ENCODE measurements at regions of chr4 and their contacts with region 1.

Region 1: DNA sequence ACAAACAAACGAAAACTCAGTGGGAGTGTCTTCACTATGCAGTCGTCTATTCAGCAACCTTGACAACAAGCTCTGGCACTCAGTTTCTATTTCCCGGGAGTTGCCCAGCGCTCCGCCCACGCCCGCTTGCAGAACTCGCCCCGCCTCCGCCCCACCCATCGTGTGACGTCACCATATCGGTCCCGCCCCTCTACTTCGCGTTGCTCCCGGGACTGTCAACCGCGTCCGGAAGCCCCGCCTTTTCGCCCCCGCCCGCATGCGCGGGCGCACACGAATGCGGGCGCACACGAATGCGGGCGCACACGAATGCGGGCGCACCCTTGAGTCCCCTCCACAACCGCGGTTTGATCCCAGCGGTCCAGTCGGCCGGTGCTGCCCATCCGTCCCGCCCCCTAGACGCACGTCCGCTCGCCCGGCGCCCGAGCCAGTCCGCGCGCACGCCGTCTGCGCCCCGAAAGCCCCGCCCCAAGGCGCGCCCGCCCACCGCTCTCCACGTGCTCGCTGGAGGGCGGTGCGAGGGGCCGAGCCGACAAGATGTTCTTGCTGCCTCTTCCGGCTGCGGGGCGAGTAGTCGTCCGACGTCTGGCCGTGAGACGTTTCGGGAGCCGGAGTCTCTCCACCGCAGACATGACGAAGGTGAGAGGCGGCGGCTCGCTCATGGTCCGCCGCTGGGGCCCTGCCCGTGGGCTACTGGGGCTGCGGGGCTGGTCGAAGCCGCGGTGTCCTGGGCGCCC is at the start of gene LAP3:
- DNase-seq: peak; percentile 100
- H3K4me3 Mint-ChIP-seq: peak within 1 kb of the TSS; percentile 97
- H3K27ac Mint-ChIP-seq: peak within 1 kb of the TSS; percentile 96
- H3K4me1 Mint-ChIP-seq: peaks cover 37% of the 10 kb centered on the region
- H3K27me3 Mint-ChIP-seq: no peaks in the 10 kb centered on the region
- total RNA-seq, gene LAP3: 114 and 126 TPM in 2 replicates

Region 2: GRCh38 chr4:15756361-15756861 is 1820.7 kb before region 1 on chr4:
- intact Hi-C with region 1: loop called (anchors 5 kb)
- DNase-seq: peak; percentile 92
- H3K4me3 Mint-ChIP-seq: peak overlapping the region; percentile 77
- H3K27ac Mint-ChIP-seq: peak overlapping the region; percentile 94
- H3K4me1 Mint-ChIP-seq: peaks cover 51% of the 10 kb centered on the region
- H3K27me3 Mint-ChIP-seq: no peaks in the 10 kb centered on the region

Region 3: DNA sequence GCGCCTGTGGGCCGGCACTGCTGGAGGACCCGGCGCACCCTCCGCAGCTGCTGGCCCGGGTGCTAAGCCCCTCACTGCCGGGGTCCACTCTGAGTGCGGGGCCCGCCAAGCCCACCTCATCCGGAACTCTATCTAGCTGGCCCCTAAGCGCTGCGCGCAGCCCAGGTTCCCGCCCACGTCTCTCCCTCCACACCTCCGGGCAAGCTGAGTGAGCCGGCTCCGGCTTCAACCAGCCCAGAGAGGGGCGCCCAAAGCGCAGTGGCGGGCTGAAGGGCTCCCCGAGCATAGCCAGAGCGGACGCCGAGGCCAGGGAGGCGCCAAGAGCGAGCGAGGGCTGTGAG is 140.4 kb before region 1 on chr4:
- intact Hi-C with region 1: no loop called
- DNase-seq: peak; percentile 52
- H3K4me3 Mint-ChIP-seq: no peak overlapping the region
- H3K27ac Mint-ChIP-seq: no peak overlapping the region
- H3K4me1 Mint-ChIP-seq: no peaks in the 10 kb centered on the region
- H3K27me3 Mint-ChIP-seq: peaks cover 2% of the 10 kb centered on the region

Region 4: DNA sequence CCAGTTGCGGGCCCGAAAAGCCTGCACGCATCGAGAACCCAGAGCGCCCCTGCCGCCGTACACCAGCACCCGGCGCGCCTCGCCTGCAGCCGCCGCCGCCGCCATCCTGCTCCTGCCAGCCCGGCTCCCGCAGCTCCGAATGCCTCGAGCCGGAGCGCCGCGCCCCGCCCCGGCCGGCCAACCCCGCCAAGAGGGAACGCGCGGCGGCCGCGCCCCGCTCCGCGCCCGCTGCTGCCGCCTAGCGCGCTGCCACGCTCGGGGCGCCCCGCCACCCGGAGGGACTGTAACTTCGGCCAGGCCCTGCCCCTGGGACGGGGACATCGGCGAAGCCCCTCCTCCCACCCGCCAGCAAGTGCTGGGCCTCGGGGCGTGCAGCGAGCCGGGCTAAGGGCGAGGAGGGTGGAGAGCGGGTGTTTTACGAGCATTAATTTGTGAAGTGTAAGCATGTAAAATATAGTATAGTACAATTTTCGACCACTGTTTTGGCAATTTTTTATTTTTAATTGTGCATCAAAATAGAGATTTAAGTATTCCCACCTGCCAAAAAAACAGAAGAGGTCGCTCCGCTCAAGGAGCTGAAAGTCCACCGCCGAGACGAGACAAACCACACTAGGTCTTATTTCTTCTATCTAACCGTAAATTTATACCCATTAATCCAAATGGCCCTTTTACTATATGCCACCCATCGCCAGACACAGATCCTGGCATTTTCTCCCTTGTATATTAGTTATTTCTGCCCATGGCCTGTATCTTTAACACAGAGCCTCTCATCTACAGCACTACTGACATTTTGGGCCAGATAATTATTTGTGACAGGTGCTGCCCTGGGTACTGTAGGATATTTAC is 64.9 kb before region 1 on chr4 and contains the start of gene QDPR:
- intact Hi-C with region 1: loop called (anchors 1 kb)
- DNase-seq: peak; percentile 92
- H3K4me3 Mint-ChIP-seq: peak within 1 kb of the TSS; percentile 96
- H3K27ac Mint-ChIP-seq: peak within 1 kb of the TSS; percentile 91
- H3K4me1 Mint-ChIP-seq: peaks cover 18% of the 10 kb centered on the region
- H3K27me3 Mint-ChIP-seq: peaks cover 11% of the 10 kb centered on the region
- total RNA-seq, gene QDPR: 31.8 and 34.4 TPM in 2 replicates

Region 5: GRCh38 chr4:17614416-17615299 is 37.6 kb after region 1 on chr4 and contains the start of gene MED28:
- intact Hi-C with region 1: loop called (anchors 1 kb)
- DNase-seq: peak; percentile 98
- H3K4me3 Mint-ChIP-seq: peak within 1 kb of the TSS; percentile 88
- H3K27ac Mint-ChIP-seq: peak within 1 kb of the TSS; percentile 92
- H3K4me1 Mint-ChIP-seq: peaks cover 30% of the 10 kb centered on the region
- H3K27me3 Mint-ChIP-seq: peaks cover 2% of the 10 kb centered on the region
- total RNA-seq, gene MED28: 54.5 and 55.5 TPM in 2 replicates

Region 6: GRCh38 chr4:17810260-17811077 is 233.4 kb after region 1 on chr4 and contains the starts of genes DCAF16 and NCAPG:
- intact Hi-C with region 1: loop called (anchors 1 kb)
- DNase-seq: peak; percentile 100
- H3K4me3 Mint-ChIP-seq: peak within 1 kb of the TSS; percentile 97
- H3K27ac Mint-ChIP-seq: peak within 1 kb of the TSS; percentile 99
- H3K4me1 Mint-ChIP-seq: peaks cover 49% of the 10 kb centered on the region
- H3K27me3 Mint-ChIP-seq: peaks cover 2% of the 10 kb centered on the region
- total RNA-seq, gene DCAF16: 47.1 and 51.4 TPM in 2 replicates
- total RNA-seq, gene NCAPG: 46.3 and 53.4 TPM in 2 replicates